ENCODE measurements at regions of chr6 and their contacts with region 1.

Region 1: DNA sequence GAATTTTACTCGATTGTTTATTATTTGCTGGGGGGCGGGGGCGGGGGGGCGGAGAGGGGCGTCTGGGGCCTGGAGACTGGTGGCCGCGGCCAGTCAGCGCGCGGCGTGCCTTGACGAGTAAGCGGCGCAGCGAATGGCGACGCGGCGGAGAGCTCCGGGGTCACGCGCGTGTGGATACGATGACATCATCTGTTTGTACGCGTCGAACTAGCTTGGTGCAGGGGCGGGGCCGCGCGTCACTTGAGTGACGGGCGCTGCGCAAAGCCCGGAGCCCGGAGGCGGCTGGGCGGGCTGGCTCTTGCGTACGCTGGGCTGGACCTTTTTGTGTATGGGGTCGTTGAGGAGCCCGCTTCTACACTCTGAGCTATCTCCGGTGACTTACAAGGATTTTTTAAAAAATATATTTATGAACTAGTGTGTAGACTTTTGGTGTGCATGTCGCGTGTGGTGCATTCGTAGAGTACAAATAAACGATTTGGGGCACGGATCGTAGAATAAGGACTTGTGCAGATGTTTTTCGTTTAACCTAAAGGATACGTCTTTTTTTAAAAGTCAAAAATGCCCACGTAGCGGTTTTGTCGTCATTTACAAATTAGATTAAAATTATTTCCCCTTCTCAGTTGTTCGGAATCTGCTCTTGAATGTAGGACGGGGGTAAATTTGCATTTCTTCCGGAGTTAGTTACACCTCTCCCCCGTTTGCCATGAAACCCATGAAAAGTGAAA is 2.2 kb upstream of the FOXO3 start:
- DNase-seq: peak; percentile 95
- H3K4me3 Mint-ChIP-seq: peak overlapping the region; percentile 88
- H3K27ac Mint-ChIP-seq: peak overlapping the region; percentile 91
- H3K4me1 Mint-ChIP-seq: peaks cover 32% of the 10 kb centered on the region
- H3K27me3 Mint-ChIP-seq: peaks cover 47% of the 10 kb centered on the region

Region 2: DNA sequence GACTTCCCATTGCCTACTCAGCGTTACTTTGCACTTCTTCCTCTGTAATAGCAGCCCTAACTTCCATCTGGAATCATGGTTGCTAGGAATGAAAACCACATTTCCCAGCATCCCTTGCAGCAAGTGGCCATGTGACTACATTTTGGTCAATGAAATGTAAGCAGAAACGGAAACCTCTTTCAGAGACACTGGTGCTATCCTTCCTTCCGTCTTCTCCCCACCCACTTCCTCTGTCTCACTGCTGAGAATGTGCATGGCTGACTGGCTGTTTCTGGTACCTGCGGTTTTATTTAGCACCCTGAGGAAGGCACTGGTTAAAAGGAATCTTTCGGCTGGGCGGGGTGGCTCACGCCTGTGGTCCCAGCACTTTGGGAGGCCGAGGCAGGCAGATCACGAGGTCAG is 841.8 kb before region 1 on chr6:
- intact Hi-C with region 1: loop called (anchors 10 kb)
- DNase-seq: peak; percentile 70
- H3K4me3 Mint-ChIP-seq: peak overlapping the region; percentile 69
- H3K27ac Mint-ChIP-seq: peak overlapping the region; percentile 89
- H3K4me1 Mint-ChIP-seq: peaks cover 55% of the 10 kb centered on the region
- H3K27me3 Mint-ChIP-seq: peaks cover 3% of the 10 kb centered on the region

Region 3: DNA sequence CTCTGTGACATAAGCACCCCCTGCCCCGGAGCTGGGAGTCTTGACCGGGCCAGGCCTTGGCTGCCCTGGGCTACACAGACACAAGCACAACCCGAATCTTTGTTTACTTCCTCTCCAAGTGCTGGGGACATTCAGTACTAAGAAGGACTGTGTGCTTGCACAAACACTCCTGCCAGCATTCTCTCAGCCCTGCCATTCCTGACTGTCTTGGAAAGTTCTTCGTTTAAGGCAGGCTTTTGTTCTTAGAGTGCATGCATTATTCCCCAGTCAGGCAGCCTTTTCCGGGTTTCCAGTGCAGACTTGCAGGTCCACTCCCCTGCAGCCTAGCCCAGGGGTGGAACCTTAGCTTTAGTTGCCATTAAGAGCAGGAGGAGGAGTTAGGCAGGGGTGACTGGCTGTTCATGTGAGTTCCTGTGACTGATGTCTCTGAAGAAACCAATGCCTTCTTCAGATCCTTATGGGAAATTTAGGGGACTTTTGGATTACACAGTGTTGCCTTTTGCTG is 30.8 kb after region 1 on chr6:
- intact Hi-C with region 1: no loop called
- DNase-seq: no peak
- H3K4me3 Mint-ChIP-seq: no peak overlapping the region
- H3K27ac Mint-ChIP-seq: no peak overlapping the region
- H3K4me1 Mint-ChIP-seq: peaks cover 22% of the 10 kb centered on the region
- H3K27me3 Mint-ChIP-seq: peaks cover 13% of the 10 kb centered on the region

Region 4: GRCh38 chr6:108782179-108783041 is 223.9 kb after region 1 on chr6:
- intact Hi-C with region 1: loop called (anchors 1 kb)
- DNase-seq: peak; percentile 63
- H3K4me3 Mint-ChIP-seq: peak overlapping the region; percentile 65
- H3K27ac Mint-ChIP-seq: no peak overlapping the region
- H3K4me1 Mint-ChIP-seq: peaks cover 14% of the 10 kb centered on the region
- H3K27me3 Mint-ChIP-seq: peaks cover 58% of the 10 kb centered on the region

Region 5: GRCh38 chr6:108874470-108875160 is 316.1 kb after region 1 on chr6:
- intact Hi-C with region 1: loop called (anchors 1 kb)
- DNase-seq: peak; percentile 51
- H3K4me3 Mint-ChIP-seq: peak overlapping the region; percentile 34
- H3K27ac Mint-ChIP-seq: peak overlapping the region; percentile 96
- H3K4me1 Mint-ChIP-seq: peaks cover 80% of the 10 kb centered on the region
- H3K27me3 Mint-ChIP-seq: peaks cover 4% of the 10 kb centered on the region

Region 6: DNA sequence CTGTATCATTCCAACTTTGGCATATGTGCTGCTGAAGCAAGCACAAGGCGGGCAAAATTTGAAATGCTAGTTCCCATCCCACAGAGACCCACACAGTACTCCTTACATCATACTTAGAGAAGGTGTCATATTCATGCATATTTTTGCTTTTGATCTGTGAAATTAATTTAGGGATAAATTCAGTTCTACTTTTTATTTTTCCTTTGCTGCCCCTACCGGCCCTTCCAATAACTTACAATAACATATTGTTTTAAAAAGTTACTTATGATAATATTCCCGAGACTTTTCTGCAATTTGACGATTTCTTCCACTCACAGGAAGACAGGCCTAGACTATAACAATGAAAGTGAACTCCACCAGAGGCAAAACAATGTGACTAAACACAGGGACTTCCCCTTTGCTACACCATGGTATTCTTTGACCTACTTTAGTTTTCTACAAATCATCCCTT is 501.1 kb after region 1 on chr6:
- intact Hi-C with region 1: loop called (anchors 5 kb)
- DNase-seq: no peak
- H3K4me3 Mint-ChIP-seq: no peak overlapping the region
- H3K27ac Mint-ChIP-seq: peak overlapping the region; percentile 72
- H3K4me1 Mint-ChIP-seq: peaks cover 13% of the 10 kb centered on the region
- H3K27me3 Mint-ChIP-seq: peaks cover 9% of the 10 kb centered on the region

Measured in activated T-helper 1 cell treated with anti-CD3 and anti-CD28 coated beads, Interleukin-12 subunit alpha, Interleukin-12 subunit beta, Interleukin-2, Interleukin-4 antibody, amounts not matched to agents 30 ng/mL and 10 ng/mL and 1 ng/mL, durations not matched to agents 14 hours and 24 hours and 36 hours (primary cell).